Activated CD8-positive, alpha-beta T cell treated with anti-CD3 and anti-CD28 coated beads for 36 hours (primary cell): ENCODE measurements at regions of chr14 and their contacts with region 1.

Region 1: GRCh38 chr14:91453744-91454143 is 36.1 kb upstream of the CCDC88C start:
- DNase-seq: no peak
- ATAC-seq: peak; percentile 40
- H3K4me3 Mint-ChIP-seq: no peak overlapping the region
- H3K27ac Mint-ChIP-seq: peak overlapping the region; percentile 55
- H3K4me1 Mint-ChIP-seq: peaks cover 29% of the 10 kb centered on the region
- H3K27me3 Mint-ChIP-seq: no peaks in the 10 kb centered on the region
- CTCF ChIP-seq: no peak

Region 2: GRCh38 chr14:91464615-91465205 is 11.0 kb after region 1 on chr14:
- CTCF ChIA-PET with region 1: no interaction called
- POLR2A ChIA-PET with region 1: interaction called, 11 read pairs
- intact Hi-C with region 1: no loop called
- DNase-seq: peak; percentile 17
- ATAC-seq: peak; percentile 64
- H3K4me3 Mint-ChIP-seq: no peak overlapping the region
- H3K27ac Mint-ChIP-seq: peak overlapping the region; percentile 83
- H3K4me1 Mint-ChIP-seq: peaks cover 36% of the 10 kb centered on the region
- H3K27me3 Mint-ChIP-seq: no peaks in the 10 kb centered on the region
- CTCF ChIP-seq: no peak

Region 3: GRCh38 chr14:91830777-91831176 is 377.0 kb after region 1 on chr14:
- CTCF ChIA-PET with region 1: no interaction called
- POLR2A ChIA-PET with region 1: no interaction called
- intact Hi-C with region 1: no loop called
- DNase-seq: peak; percentile 31
- ATAC-seq: peak; percentile 45
- H3K4me3 Mint-ChIP-seq: no peak overlapping the region
- H3K27ac Mint-ChIP-seq: peak overlapping the region; percentile 26
- H3K4me1 Mint-ChIP-seq: peaks cover 70% of the 10 kb centered on the region
- H3K27me3 Mint-ChIP-seq: no peaks in the 10 kb centered on the region
- CTCF ChIP-seq: no peak